ENCODE measurements at regions of chr11 and their contacts with region 1.

Region 1: DNA sequence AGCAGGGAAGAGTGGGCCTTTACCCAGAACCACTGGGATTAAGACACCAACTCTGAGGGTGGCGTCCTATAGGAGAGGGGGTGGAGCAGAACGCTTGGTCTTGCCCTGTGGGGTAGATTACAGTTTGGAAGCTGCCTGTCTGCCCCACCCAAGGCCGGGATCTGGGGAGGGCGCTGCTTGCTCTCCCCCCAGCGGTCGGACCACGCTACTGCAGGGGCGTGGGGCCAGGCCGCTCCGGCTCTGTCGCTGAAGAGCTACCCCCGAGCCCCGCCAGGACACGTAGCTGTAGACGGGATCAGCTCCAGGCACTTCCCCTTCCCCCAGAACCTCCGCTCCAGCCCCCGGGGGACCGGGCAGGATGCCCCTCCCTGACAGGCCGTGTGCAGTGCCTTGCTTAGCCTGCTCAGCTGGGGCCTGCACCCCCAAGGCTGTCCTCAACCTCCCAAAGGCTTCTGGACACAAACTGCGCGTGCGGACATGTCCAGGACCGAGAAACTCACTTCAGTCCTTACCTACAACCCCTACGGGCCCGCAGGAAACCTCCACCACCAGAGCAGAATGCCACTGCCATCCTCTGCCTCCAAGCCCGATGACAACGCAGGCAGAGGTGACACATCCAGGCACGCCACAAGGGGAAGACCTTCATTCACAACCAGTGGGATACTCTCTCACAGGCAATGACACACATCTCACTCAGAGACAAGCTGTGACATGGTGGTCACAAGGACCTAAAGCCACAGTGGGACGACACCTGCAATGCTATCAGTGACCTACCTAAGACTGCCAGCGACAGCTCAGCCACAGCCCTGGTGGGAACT is 3.6 kb downstream of the AHNAK start:
- DNase-seq: no peak
- H3K4me3 ChIP-seq: peak overlapping the region; percentile 96
- H3K27me3 ChIP-seq: no peaks in the 10 kb centered on the region
- CTCF ChIP-seq: peak; percentile 100

Region 2: GRCh38 chr11:62394825-62395538 is 148.0 kb before region 1 on chr11:
- CTCF ChIA-PET with region 1: interaction called, 95 read pairs
- POLR2A ChIA-PET with region 1: interaction called, 3 read pairs
- DNase-seq: peak; percentile 41
- H3K4me3 ChIP-seq: peak overlapping the region; percentile 13; the same call in 1 of the 2 replicates
- H3K27me3 ChIP-seq: peaks cover 6% of the 10 kb centered on the region
- CTCF ChIP-seq: peak; percentile 56

Region 3: DNA sequence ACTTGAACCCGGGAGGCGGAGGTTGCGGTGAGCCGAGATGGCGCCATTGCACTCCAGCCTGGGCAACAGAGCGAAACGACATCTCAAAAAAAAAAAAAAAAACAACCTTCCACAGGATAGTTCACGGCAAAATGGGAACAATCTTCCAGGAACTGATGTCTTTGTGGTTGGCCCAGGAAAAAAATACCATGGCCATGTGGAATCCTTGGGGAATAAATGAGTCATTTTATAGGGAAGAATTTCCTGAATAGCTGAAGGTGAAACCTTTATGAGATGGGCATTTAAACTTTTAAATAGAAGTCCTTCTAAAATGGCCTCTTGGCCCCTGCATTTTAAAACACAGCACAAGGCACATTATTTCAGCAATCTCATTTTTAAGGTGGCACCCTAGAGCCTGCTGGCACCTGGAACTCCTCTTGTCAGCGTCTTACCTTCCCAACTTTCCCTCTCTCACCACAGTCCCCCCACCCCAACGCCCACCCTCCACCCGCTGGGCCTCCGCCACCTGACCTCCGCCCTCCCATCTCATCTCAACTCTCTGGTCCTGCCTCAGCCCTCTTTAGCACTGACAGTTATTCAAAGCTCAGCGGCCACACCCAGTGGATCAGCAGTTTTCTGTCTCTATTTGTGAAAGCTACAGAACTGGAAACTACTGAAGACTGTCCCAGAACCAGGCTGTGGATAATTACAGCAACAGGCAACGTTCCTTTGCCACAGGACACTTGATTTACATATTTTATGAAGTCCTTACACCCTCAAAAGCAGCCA is 81.0 kb before region 1 on chr11:
- CTCF ChIA-PET with region 1: interaction called, 10 read pairs
- POLR2A ChIA-PET with region 1: interaction called, 17 read pairs
- DNase-seq: peak; percentile 86
- H3K4me3 ChIP-seq: no peak overlapping the region
- H3K27me3 ChIP-seq: no peaks in the 10 kb centered on the region
- CTCF ChIP-seq: no peak

Region 4: GRCh38 chr11:62489204-62489603 is 53.8 kb before region 1 on chr11:
- CTCF ChIA-PET with region 1: interaction called, 7 read pairs
- POLR2A ChIA-PET with region 1: interaction called, 11 read pairs
- DNase-seq: no peak
- H3K4me3 ChIP-seq: no peak overlapping the region
- H3K27me3 ChIP-seq: no peaks in the 10 kb centered on the region
- CTCF ChIP-seq: no peak

Region 5: GRCh38 chr11:62532096-62532495 is 10.9 kb before region 1 on chr11:
- CTCF ChIA-PET with region 1: no interaction called
- POLR2A ChIA-PET with region 1: no interaction called
- DNase-seq: no peak
- H3K4me3 ChIP-seq: no peak overlapping the region
- H3K27me3 ChIP-seq: no peaks in the 10 kb centered on the region
- CTCF ChIP-seq: no peak

Region 6: GRCh38 chr11:62556108-62556871 is 13.3 kb after region 1 on chr11:
- CTCF ChIA-PET with region 1: interaction called, 47 read pairs
- POLR2A ChIA-PET with region 1: interaction called, 8 read pairs
- DNase-seq: peak; percentile 81
- H3K4me3 ChIP-seq: 0 out of 2 replicates have a peak overlapping the region, but pooled peaks have one; percentile 10
- H3K27me3 ChIP-seq: no peaks in the 10 kb centered on the region
- CTCF ChIP-seq: no peak